Ascending aorta (tissue), 2 donors: ENCODE measurements at regions of chrX and their contacts with region 1.

Region 1: DNA sequence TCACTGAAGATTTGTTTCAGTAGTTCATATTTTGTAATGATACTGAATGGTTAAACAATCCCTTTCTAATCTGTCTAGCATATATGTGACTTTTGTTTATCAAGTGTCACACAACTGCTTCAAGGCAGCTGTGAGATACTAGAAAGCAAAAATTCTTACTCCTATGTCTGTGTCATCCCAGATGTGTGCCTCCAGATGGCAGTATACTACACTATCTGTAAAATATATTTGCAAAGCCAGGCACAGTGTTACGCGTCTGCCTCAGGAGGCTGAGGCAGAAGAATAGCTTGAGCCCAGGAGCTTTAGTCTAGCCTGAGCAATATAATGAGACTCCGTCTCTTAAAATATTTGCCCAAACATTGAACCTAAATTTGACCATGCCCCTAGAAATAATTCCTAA is 4.0 kb downstream of the NUDT10 start:
- DNase-seq: no peak
- H3K4me3 ChIP-seq: no peak overlapping the region
- H3K27ac ChIP-seq: no peak overlapping the region
- H3K4me1 ChIP-seq: no peaks in the 10 kb centered on the region
- H3K27me3 ChIP-seq: no peaks in the 10 kb centered on the region
- CTCF ChIP-seq: peak in 2 of 3 experiments; percentile 8 to 57

Region 2: DNA sequence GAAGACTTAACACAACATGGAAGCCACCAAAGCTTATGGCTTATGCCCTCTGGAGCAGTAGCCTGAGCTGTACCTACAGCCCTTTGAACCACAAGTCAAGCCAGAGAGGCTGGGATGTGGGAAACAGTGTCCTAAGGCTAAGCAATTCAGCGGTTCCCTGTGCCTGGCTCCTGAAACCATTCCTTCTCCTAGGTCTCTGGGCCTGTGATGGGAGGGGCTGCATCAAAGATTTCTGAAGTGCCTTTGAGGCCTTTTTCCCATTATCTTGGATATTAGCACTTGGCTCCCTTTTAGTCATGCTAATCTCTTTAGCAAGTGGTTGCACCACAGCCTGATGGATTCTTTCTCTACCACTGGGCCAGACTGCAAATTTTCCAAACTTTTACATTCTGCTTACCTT is 144.5 kb before region 1 on chrX:
- intact Hi-C with region 1: no loop called
- DNase-seq: no peak
- H3K4me3 ChIP-seq: no peak overlapping the region
- H3K27ac ChIP-seq: no peak overlapping the region
- H3K4me1 ChIP-seq: no peaks in the 10 kb centered on the region
- H3K27me3 ChIP-seq: no peaks in the 10 kb centered on the region
- CTCF ChIP-seq: no peak

Region 3: GRCh38 chrX:51361251-51361650 is 24.7 kb after region 1 on chrX:
- intact Hi-C with region 1: no loop called
- DNase-seq: no peak
- H3K4me3 ChIP-seq: no peak overlapping the region
- H3K27ac ChIP-seq: no peak overlapping the region
- H3K4me1 ChIP-seq: no peaks in the 10 kb centered on the region
- H3K27me3 ChIP-seq: no peaks in the 10 kb centered on the region
- CTCF ChIP-seq: no peak

Region 4: DNA sequence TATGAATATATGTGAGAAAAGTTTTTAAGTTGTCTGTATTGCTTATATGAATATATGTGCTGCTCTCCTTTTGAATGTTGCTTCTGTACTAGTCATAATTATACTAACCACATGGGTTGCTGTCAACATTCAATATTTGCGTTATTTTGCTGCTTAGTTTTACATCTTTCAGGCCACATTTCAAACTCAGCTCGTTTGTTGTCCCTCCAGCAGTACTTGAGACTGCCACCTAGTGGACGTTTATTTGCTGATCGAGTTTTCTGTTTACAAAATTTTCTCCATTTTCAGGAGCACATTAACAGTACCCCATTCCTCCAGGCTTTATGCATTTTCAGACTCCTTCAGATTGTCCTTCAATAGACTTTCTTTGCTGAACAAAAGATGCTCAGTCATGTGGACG is 84.0 kb after region 1 on chrX:
- intact Hi-C with region 1: loop called (anchors 1 kb)
- DNase-seq: no peak
- H3K4me3 ChIP-seq: no peak overlapping the region
- H3K27ac ChIP-seq: no peak overlapping the region
- H3K4me1 ChIP-seq: no peaks in the 10 kb centered on the region
- H3K27me3 ChIP-seq: no peaks in the 10 kb centered on the region
- CTCF ChIP-seq: peak; percentile 32 to 73 (median 70)